ENCODE measurements at regions of chr9 and their contacts with region 1.

Region 1: DNA sequence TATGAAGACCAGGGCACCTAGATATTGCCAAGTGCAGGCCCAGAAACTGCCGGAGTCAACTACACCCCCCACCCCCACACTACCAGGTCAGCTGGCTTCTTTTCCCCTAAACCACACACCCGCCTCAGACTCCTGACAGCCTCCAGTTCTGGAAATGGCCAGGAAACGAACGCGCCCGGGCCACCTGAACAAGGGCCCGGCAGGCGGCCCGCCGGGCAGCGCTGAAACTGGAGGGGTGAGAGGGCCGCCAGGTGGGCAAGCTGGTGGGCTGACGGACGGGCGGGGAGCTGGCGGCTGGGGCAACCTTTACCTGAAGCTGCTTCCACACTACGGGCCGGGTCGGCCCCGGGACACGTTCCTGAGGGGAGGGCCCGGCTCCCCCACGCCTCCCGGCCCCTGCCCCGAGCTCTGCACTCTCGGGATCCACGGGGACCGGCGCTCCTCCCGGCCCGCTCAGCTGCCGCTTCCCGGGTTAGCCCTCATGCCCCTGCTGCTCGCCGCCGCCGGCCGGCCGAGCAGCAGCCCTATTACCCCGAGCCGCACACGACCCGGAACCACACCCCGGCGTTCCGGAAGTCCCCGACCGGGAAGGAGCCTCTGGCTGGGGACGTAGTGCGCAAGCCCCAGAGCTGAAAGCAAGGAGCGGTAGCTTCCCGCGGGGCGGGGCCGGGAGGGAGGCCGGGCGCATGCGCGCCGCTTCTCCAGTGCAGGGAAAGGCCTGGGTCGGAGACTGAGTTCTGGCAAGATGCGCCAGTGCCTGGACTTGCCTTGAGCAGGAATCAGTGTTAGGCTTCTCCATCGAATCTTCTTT is at the start of gene MAPKAP1:
- H3K4me3 ChIP-seq: peak within 1 kb of the TSS; percentile 93
- H3K27ac ChIP-seq: peak within 1 kb of the TSS; percentile 82
- H3K4me1 ChIP-seq: peaks cover 7% of the 10 kb centered on the region; the same call in 1 of the 2 replicates
- CTCF ChIP-seq: peak; percentile 37

Region 2: DNA sequence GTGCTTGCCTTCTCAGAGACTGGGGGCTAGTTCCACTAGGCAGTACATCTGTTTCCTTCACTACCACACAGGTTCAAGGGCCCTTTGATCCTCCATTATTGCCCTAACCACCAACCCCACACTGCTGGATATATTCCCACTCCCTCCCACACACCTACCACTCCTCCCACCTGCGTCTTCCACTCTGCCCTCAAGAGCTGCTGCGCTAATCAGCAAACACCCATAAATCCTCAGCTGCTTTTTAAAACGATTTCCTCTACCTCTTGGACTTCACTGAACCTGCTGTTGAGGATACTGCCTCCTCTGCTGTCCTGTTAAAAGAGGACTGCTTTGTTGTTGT is 120.7 kb before region 1 on chr9:
- CTCF ChIA-PET with region 1: no interaction called
- POLR2A ChIA-PET with region 1: no interaction called
- H3K4me3 ChIP-seq: no peak overlapping the region
- H3K27ac ChIP-seq: no peak overlapping the region
- H3K4me1 ChIP-seq: no peaks in the 10 kb centered on the region
- CTCF ChIP-seq: no peak

Region 3: DNA sequence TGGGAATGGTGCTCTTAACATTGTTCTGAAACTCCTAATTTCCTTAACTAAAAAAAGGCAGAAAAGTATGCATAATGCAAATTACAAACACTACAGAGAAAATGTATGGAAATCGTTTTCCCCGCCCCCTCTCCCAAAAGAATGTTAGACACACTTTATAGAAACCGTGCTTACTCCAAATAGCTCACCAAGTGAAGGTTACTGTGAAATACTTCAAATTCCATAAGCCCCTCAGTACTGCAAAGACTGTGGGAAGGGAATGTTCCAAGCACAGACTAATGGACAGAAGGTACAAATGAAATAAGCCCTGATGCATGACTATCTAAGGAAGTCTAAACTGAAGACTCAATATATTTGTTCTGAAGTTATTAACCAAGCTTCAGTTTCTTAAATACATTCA is 12.4 kb before region 1 on chr9:
- CTCF ChIA-PET with region 1: interaction called, 4 read pairs
- POLR2A ChIA-PET with region 1: interaction called, 21 read pairs
- H3K4me3 ChIP-seq: no peak overlapping the region
- H3K27ac ChIP-seq: no peak overlapping the region
- H3K4me1 ChIP-seq: no peaks in the 10 kb centered on the region
- CTCF ChIP-seq: no peak

Region 4: GRCh38 chr9:125746017-125746773 is 39.3 kb after region 1 on chr9:
- CTCF ChIA-PET with region 1: interaction called, 3 read pairs
- POLR2A ChIA-PET with region 1: interaction called, 20 read pairs
- H3K4me3 ChIP-seq: peak overlapping the region; percentile 69
- H3K27ac ChIP-seq: peak overlapping the region; percentile 95
- H3K4me1 ChIP-seq: peaks cover 18% of the 10 kb centered on the region
- CTCF ChIP-seq: no peak